ENCODE measurements at regions of chr2 and their contacts with region 1.

Region 1: DNA sequence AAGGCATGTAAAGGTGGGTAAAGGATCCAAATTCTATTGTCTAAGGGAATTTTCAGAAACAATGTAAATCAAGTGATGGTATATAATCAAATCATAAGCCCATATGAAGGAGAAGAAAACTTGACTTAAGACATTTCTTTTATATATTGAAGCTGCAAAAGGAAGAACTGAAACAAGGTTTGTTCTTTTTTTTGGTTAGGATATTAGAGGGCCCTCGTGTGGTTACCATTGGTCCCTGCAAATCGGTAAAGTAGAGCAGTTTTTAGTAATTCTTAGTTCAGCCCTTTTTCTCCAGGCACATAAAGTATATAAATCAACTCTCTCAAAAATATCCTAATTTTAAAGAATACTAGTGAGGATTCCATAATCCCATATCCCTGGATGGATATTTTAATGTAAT is 105.6 kb upstream of the STK17B start:
- DNase-seq: peak; percentile 46 to 70 (median 64)
- H3K4me3 ChIP-seq: no peak overlapping the region
- H3K4me3 Mint-ChIP-seq: peak overlapping the region in 5 of 8 donors; percentile 0 to 75 (median 40)
- H3K27ac ChIP-seq: peak overlapping the region; percentile 34
- H3K27ac Mint-ChIP-seq: peak overlapping the region; percentile 21 to 95 (median 81)
- H3K4me1 ChIP-seq: peaks cover 38% of the 10 kb centered on the region
- H3K4me1 Mint-ChIP-seq: peaks cover 30 to 60% (median 36%) of the 10 kb centered on the region in 4 donors
- H3K27me3 ChIP-seq: no peaks in the 10 kb centered on the region
- H3K27me3 Mint-ChIP-seq: no peaks in the 10 kb centered on the region

Region 2: DNA sequence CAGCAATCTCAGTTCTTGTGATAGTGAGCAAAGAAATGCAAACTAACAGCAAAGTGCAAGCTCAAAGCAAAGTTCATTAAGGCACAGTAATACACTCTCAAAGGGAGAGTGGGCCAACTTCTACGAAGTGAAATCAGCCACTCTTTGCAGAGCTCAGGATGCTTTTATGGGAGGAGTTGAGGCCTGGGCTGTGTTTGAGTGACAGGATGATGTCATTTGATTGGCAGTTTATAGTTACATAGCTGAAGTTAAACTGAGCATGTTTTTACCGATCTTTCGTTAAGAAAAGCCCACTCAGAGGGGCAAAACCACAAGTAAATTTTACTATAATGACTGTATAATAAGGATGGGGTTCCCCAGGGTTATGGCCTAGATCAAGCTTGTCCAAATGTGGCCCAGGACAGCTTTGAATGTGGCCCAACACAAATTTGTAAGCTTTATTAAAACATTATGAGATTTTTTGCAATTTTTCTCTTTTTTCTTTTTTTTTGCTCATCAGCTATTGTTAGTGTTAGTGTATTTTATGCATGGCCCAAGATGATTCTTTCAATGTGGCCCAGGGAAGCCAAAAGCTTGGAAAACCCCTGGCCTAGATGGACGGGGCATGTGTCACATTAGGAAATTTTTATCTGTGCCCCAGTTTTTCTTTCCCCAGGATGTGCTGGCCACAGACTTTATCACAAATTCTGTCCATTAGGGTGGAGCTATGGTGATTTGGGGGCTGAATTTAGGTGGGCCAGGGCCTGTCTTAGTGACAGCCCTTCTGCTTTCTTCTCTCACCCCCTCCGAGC is 200.0 kb before region 1 on chr2:
- CTCF ChIA-PET with region 1: interaction called, 149 read pairs
- POLR2A ChIA-PET with region 1: interaction called, 21 read pairs
- intact Hi-C with region 1: loop called (anchors 1 kb)
- DNase-seq: no peak
- H3K4me3 ChIP-seq: no peak overlapping the region
- H3K4me3 Mint-ChIP-seq: no peak overlapping the region
- H3K27ac ChIP-seq: no peak overlapping the region
- H3K27ac Mint-ChIP-seq: no peak overlapping the region
- H3K4me1 ChIP-seq: peaks cover 25% of the 10 kb centered on the region
- H3K4me1 Mint-ChIP-seq: peaks cover 14 to 22% (median 16%) of the 10 kb centered on the region in 4 donors
- H3K27me3 ChIP-seq: no peaks in the 10 kb centered on the region
- H3K27me3 Mint-ChIP-seq: no peaks in the 10 kb centered on the region

Region 3: DNA sequence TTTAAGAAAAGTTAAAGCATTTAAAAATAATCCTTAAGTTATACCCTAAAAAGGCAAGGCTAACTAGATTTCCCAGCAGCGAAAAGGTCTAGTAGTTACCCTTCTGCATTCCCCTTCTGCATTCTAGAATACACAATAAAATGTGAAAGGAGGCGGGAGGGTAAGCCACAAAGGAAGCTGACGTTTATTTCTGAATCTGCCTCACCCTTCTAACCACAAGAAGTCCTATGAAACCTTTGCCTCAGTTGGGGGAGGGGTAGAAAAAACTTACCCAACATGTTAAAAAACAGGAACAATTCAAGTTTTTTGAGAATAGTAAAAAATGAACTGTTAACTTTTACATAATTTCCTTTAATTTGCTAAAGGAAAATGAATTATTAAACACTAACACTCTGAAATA is 116.9 kb before region 1 on chr2:
- CTCF ChIA-PET with region 1: interaction called, 93 read pairs
- POLR2A ChIA-PET with region 1: interaction called, 40 read pairs
- intact Hi-C with region 1: no loop called
- DNase-seq: peak; percentile 86 to 90 (median 87)
- H3K4me3 ChIP-seq: peak overlapping the region in 1 of 2 donors; percentile 1
- H3K4me3 Mint-ChIP-seq: peak overlapping the region; percentile 62 to 90 (median 78)
- H3K27ac ChIP-seq: peak overlapping the region; percentile 95
- H3K27ac Mint-ChIP-seq: peak overlapping the region; percentile 92 to 98 (median 96)
- H3K4me1 ChIP-seq: peaks cover 96% of the 10 kb centered on the region
- H3K4me1 Mint-ChIP-seq: peaks cover 38 to 93% (median 59%) of the 10 kb centered on the region in 4 donors
- H3K27me3 ChIP-seq: no peaks in the 10 kb centered on the region
- H3K27me3 Mint-ChIP-seq: no peaks in the 10 kb centered on the region

Region 4: DNA sequence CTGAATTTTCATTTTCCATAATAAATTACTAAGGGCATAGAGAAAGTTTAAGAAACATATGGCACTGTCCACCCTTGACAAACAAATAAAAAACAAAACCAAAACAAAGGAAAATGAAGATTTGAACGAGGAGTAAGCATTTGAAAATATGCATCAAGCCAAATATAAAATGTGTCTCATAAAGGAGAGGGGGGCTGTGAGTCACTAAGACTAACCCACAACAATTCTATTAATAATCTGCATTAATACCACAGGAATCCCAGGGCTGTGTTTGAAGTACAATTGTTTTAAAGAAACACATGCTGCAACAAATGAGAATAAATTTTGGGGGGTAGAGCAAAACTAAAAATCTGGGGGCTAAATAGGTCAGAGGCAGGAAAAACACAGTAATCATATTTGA is 51.8 kb before region 1 on chr2:
- CTCF ChIA-PET with region 1: interaction called, 71 read pairs
- POLR2A ChIA-PET with region 1: interaction called, 64 read pairs
- intact Hi-C with region 1: loop called (anchors 1 kb)
- DNase-seq: no peak
- H3K4me3 ChIP-seq: no peak overlapping the region
- H3K4me3 Mint-ChIP-seq: peak overlapping the region in 3 of 8 donors; percentile 33 to 57 (median 41)
- H3K27ac ChIP-seq: no peak overlapping the region
- H3K27ac Mint-ChIP-seq: peak overlapping the region in 5 of 7 donors; percentile 1 to 68 (median 54)
- H3K4me1 ChIP-seq: peaks cover 79% of the 10 kb centered on the region
- H3K4me1 Mint-ChIP-seq: peaks cover 51 to 85% (median 69%) of the 10 kb centered on the region in 4 donors
- H3K27me3 ChIP-seq: no peaks in the 10 kb centered on the region
- H3K27me3 Mint-ChIP-seq: no peaks in the 10 kb centered on the region

Region 5: DNA sequence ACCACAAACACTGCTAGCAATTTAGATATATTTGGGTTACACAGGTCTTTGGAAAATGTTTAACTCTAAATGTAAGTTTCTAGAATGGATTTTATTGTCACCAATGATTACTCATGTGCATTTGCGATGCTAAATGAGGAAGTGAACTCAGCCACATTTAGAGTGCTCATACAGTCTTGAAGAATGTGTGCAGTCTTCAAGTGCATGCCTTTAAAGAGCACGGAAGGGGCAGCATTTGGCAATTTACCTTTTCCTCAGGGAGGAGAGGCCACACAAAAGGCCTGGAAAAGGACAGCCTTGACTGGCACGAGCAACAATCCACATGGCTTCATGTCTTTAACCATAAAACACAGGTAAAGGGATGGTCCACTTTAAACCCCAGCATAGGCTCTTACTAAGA is 27.1 kb before region 1 on chr2:
- CTCF ChIA-PET with region 1: interaction called, 29 read pairs
- POLR2A ChIA-PET with region 1: interaction called, 5 read pairs
- intact Hi-C with region 1: no loop called
- DNase-seq: no peak
- H3K4me3 ChIP-seq: no peak overlapping the region
- H3K4me3 Mint-ChIP-seq: peak overlapping the region in 3 of 8 donors; percentile 6 to 66 (median 55)
- H3K27ac ChIP-seq: no peak overlapping the region
- H3K27ac Mint-ChIP-seq: peak overlapping the region in 6 of 7 donors; percentile 13 to 82 (median 42)
- H3K4me1 ChIP-seq: peaks cover 39% of the 10 kb centered on the region
- H3K4me1 Mint-ChIP-seq: peaks cover 56 to 78% (median 65%) of the 10 kb centered on the region in 4 donors
- H3K27me3 ChIP-seq: no peaks in the 10 kb centered on the region
- H3K27me3 Mint-ChIP-seq: no peaks in the 10 kb centered on the region

Region 6: DNA sequence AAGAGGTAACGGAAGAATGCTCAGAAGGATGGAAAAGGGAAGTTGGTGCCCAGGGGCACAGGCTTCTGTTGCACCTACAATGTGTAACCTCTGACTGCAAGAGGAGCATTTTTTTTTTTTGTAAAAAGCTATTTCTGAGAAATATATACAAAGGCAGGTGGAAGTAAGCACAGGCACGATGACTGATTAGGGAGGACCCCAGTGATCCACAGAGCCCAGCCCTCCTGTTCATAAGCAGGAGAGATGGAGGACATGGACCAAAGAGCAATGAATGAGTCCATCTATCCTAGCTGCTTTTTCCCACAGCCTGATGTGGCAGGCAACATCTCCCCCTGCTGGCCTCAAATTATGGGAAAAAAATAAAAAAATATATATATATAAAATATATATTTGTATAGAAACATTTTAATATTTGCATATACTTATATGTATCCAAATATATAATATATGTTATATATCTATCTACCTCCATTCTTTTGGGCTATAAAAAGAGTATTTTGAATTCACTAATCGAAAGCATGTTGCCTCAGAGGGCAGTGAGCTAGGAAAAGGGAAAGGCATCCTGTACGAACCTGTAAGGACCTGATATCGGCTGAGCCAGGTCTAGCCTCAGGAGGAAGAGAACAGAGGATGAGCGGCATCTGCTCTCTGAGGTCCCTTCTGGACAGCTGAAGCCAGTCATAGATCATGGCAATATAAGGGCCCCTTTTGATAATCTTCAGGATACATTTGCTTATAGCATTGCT is 60.4 kb after region 1 on chr2:
- CTCF ChIA-PET with region 1: interaction called, 5 read pairs
- POLR2A ChIA-PET with region 1: no interaction called
- intact Hi-C with region 1: loop called (anchors 5 kb)
- DNase-seq: peak in 4 of 5 donors; percentile 23 to 32 (median 24)
- H3K4me3 ChIP-seq: no peak overlapping the region
- H3K4me3 Mint-ChIP-seq: no peak overlapping the region
- H3K27ac ChIP-seq: no peak overlapping the region
- H3K27ac Mint-ChIP-seq: no peak overlapping the region
- H3K4me1 ChIP-seq: peaks cover 4% of the 10 kb centered on the region
- H3K4me1 Mint-ChIP-seq: peaks cover 0 to 7% (median 1%) of the 10 kb centered on the region in 4 donors
- H3K27me3 ChIP-seq: no peaks in the 10 kb centered on the region
- H3K27me3 Mint-ChIP-seq: peaks cover 0 to 1% of the 10 kb centered on the region in 2 donors